ENCODE measurements at regions of chr3 and their contacts with region 1.

Region 1: GRCh38 chr3:172666873-172667694 is 43.8 kb downstream of the NCEH1 start:
- DNase-seq: peak; percentile 71
- ATAC-seq: peak; percentile 99
- H3K4me3 ChIP-seq: no peak overlapping the region
- H3K27ac ChIP-seq: peak overlapping the region; percentile 65
- H3K4me1 ChIP-seq: peaks cover 9% of the 10 kb centered on the region; the same call in 1 of the 2 replicates
- H3K27me3 ChIP-seq: no peaks in the 10 kb centered on the region
- CTCF ChIP-seq: peak; percentile 90

Region 2: DNA sequence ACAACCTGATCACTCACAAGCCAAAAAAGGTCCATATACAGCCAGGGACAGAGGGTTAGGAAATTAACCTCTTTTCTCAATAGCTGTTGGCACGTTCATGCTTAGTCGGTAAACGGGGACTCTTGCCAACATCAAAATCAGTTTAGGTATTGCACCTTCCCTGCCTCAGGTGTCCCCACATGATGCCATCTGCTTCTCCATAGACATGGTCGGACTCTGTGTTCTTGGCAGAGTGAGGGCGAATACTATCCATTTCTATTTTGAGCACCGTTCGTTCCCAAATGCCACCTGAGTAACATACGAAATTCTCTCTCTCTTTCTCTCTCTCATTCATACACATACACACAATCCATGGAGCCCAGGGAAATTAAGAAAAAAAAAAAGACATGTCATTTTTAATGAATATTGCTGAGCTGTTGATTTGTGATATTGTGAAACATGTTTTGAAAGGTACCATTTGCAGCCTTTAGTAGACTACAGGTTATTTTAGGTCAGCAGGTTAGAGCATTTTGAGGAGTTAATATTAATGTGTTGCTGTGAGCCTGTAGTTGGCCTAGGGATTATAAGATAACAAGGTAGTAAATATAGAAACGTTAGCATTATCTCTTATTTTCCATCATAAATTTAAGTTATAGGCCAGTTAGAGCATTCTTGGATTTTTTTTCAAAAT is 297.4 kb before region 1 on chr3:
- CTCF ChIA-PET with region 1: no interaction called
- POLR2A ChIA-PET with region 1: no interaction called
- in situ Hi-C with region 1: no loop called
- intact Hi-C with region 1: loop called (anchors 10 kb)
- DNase-seq: no peak
- ATAC-seq: no peak
- H3K4me3 ChIP-seq: no peak overlapping the region
- H3K27ac ChIP-seq: no peak overlapping the region
- H3K4me1 ChIP-seq: no peaks in the 10 kb centered on the region
- H3K27me3 ChIP-seq: no peaks in the 10 kb centered on the region
- CTCF ChIP-seq: no peak

Region 3: DNA sequence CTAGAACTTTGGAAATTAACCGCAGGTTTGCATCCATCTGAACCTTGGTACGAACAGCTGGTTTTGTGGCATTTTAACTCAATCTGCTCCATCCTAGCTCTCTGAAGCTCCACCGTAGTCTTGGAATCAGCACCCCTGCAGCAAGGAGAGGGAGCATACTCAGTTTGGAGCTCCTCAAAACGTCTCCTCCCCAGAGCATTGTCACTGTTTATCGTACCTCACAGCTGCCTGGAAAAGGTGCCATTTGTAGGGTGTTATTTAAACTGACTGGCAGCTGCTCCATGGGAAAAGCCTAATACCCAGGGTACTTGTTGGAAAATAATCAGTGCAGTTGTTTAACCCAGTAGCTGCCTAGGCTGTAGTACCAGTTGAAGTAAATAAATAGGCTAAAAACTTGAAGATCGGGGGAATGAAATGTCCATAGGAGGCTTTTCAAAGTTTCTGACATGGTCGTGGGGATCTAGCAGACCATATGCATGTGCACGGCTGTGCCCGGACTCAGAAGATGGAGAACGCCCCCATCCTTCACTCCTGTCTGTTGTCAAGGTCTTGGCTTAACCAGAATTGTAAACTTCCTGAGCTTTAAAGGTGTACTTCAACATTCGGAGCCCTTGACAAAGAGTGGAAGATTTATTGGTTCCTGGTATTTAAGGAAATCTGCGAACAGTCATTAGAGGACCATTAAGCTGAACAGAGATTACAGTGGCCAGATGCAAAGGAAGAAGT is 262.7 kb before region 1 on chr3:
- CTCF ChIA-PET with region 1: no interaction called
- POLR2A ChIA-PET with region 1: no interaction called
- in situ Hi-C with region 1: no loop called
- intact Hi-C with region 1: loop called (anchors 10 kb)
- DNase-seq: no peak
- ATAC-seq: no peak
- H3K4me3 ChIP-seq: no peak overlapping the region
- H3K27ac ChIP-seq: no peak overlapping the region
- H3K4me1 ChIP-seq: no peaks in the 10 kb centered on the region
- H3K27me3 ChIP-seq: no peaks in the 10 kb centered on the region
- CTCF ChIP-seq: no peak